ENCODE measurements at regions of chr20 and their contacts with region 1.

Region 1: DNA sequence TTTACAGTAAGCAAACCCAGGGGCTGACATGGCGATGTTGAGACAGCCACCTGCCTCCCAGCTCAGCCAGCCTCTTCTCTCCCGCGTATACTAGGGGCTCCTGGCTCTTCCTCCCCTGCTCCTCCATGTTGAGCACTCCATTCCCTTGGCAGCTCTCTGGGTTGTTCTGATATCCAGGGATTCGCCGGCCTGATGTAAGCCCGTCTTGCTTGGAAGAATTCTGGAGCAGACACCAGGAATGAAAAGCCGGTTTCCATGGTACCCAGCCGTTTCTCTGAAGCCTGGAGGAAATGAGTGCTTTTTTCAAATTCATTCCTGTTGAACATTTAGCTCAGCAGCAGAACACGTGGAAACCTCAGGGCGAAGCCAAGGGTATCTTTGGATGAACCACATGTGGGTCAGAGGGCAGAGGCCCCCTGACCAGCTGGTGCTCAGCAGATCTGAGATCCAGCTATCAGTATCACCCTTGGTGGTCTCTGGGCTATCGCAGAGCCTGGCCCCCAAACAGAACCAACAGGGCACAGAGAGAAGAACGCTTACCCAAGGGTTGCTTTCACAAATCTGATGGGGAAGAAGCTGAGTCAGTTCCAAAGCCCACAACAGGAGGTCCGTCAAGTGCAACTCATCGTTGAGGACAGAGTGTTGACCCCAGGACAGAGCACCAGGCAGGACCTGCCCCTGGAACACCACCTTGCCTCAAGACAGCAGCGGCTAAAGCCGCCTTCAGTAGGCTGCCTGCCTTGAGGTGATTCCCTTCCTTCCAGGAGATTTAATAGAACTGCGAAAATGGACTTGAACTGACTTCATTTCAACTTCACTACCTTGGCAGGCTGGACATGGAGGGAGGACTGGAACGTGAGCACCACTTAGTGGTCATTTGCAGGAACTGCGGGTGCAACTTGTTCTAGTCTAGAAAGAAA is 96.1 kb upstream of the RIN2 start:
- DNase-seq: peak in 4 of 5 donors; percentile 37 to 57 (median 44)
- ATAC-seq: peak in 3 of 4 donors; percentile 75 to 84 (median 81)
- H3K4me3 ChIP-seq: no peak overlapping the region
- H3K27ac ChIP-seq: no peak overlapping the region
- H3K4me1 ChIP-seq: peaks cover 0 to 9% (median 1%) of the 10 kb centered on the region in 12 donors
- H3K27me3 ChIP-seq: peaks cover 0 to 26% (median 0%) of the 10 kb centered on the region in 9 donors
- CTCF ChIP-seq: peak in 11 of 12 donors; percentile 96 to 99 (median 98)
- POLR2A ChIP-seq: no peak

Region 2: DNA sequence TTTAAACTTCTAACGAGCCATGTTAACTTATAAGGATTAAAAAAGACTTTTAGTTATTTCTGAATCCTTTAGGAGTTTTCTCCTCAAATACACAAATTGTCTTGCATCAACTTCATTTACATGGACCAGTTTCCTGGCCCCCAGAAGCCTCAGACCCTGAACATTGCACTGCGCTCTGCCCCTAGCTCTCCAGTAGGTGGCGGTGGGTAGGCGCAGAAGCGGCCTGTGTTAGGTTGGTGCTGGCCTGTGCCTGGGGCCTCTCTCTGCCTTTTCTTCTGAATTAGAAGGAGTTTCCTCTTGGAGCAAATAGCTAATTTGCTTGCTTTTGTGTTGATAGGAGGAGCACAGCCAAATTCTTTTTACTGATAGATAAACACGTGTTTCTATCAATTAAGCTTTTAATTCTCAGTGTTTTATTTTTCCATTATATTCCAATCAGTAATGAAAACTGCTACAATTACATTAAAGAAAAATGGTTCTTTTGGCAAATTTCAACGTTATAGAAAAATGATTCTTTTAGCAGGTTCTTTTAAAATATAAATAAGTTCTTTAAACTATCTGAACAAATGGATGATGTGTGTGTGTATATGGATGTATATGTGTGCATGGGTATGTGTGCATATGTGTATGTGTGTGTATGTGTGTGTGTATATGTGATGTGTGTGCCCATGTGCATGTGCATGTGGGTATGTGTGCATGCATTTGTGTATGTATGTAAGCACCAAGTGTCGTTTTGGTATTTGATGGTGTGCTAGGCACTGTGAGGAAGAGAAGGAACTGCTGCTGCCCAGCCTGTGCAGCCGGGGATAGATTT is 1029.6 kb before region 1 on chr20:
- intact Hi-C with region 1: loop called in 5 of 10 experiments (anchors 1 to 10 kb)
- DNase-seq: peak; percentile 56 to 70 (median 61)
- ATAC-seq: peak; percentile 88 to 94 (median 89)
- H3K4me3 ChIP-seq: no peak overlapping the region
- H3K27ac ChIP-seq: no peak overlapping the region
- H3K4me1 ChIP-seq: peaks cover 0 to 5% (median 0%) of the 10 kb centered on the region in 12 donors
- H3K27me3 ChIP-seq: no peaks in the 10 kb centered on the region
- CTCF ChIP-seq: peak; percentile 77 to 96 (median 86)
- POLR2A ChIP-seq: no peak

Region 3: GRCh38 chr20:19205977-19206396 is 456.0 kb before region 1 on chr20:
- intact Hi-C with region 1: loop called in 9 of 10 experiments (anchors 1 to 5 kb)
- DNase-seq: peak; percentile 46 to 82 (median 64)
- ATAC-seq: peak in 3 of 4 donors; percentile 48 to 70 (median 61)
- H3K4me3 ChIP-seq: no peak overlapping the region
- H3K27ac ChIP-seq: no peak overlapping the region
- H3K4me1 ChIP-seq: peaks cover 0 to 4% (median 0%) of the 10 kb centered on the region in 12 donors
- H3K27me3 ChIP-seq: peaks cover 0 to 12% (median 0%) of the 10 kb centered on the region in 9 donors
- CTCF ChIP-seq: peak; percentile 77 to 92 (median 84)
- POLR2A ChIP-seq: no peak

Region 4: GRCh38 chr20:19583532-19584175 is 78.3 kb before region 1 on chr20:
- intact Hi-C with region 1: loop called in 3 of 10 experiments (anchors 2 to 10 kb)
- DNase-seq: peak; percentile 44 to 79 (median 65)
- ATAC-seq: peak in 3 of 4 donors; percentile 81 to 86 (median 85)
- H3K4me3 ChIP-seq: no peak overlapping the region
- H3K27ac ChIP-seq: no peak overlapping the region
- H3K4me1 ChIP-seq: no peaks in the 10 kb centered on the region
- H3K27me3 ChIP-seq: peaks cover 0 to 6% (median 0%) of the 10 kb centered on the region in 9 donors
- CTCF ChIP-seq: peak; percentile 70 to 85 (median 79)
- POLR2A ChIP-seq: no peak

Region 5: DNA sequence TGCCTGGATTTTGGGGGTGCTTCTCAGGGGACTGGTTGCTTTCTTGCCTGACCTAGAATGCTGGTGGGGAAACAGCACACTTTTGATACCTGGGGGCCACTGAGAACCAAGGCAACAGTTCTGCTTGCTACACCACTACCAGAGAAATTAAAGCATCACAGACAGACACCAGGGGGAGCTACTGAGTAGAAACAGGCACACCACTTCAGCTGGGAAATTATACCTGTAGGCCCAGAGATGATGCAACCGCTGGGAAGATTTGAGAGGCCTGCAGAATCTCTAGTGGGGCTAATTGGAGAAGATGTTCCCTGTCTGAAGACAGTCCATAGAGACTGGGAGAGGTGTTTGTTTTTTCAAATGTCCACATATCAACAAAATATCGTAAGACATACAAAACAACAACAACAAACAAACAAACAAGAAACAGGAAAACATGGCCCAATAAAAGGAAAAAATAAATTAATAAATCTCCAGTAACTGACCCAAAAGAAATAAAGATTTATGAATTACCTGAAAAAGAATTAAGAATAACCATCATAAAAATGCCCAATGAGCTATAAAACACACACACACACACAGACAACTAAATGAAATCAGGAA is 33.3 kb before region 1 on chr20:
- intact Hi-C with region 1: loop called in 9 of 10 experiments (anchors 1 to 5 kb)
- DNase-seq: peak in 3 of 5 donors; percentile 25 to 43 (median 27)
- ATAC-seq: peak in 3 of 4 donors; percentile 45 to 54 (median 51)
- H3K4me3 ChIP-seq: no peak overlapping the region
- H3K27ac ChIP-seq: no peak overlapping the region
- H3K4me1 ChIP-seq: peaks cover 0 to under 1% (median 0%) of the 10 kb centered on the region in 12 donors
- H3K27me3 ChIP-seq: no peaks in the 10 kb centered on the region
- CTCF ChIP-seq: peak; percentile 37 to 72 (median 60)
- POLR2A ChIP-seq: no peak

Region 6: DNA sequence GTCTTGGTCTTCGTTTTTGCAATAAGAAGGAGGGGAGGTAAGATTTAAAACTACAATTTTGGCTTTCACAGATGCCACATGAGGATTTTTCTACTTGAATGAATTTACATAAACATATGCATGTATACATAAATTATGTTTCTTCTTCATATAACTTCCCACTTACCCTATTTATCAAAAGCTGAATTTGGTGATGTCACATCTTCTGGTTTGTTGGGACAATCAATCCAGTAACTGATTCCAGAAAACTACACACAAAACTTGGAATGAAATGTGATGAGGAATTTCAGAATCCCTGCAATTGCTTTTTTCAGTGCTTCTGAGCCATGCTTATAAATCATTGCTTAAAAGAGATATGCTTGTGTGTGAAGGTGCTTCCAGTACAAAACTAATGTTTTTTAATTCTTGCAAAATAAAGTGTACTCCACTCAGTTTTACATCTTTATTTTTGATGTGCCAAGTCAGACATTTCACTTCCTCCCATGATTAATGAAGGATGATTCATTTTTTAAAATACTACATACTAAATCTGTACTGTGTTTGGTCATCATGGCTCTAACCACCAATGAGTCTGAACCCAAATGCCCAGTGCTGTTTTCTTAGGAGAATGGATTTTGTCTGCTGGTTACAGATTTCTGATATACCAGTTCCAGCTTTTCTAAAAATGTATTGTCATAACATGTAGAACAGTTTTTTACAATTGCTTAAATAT is 64.0 kb after region 1 on chr20:
- intact Hi-C with region 1: no loop called
- DNase-seq: no peak
- ATAC-seq: no peak
- H3K4me3 ChIP-seq: no peak overlapping the region
- H3K27ac ChIP-seq: no peak overlapping the region
- H3K4me1 ChIP-seq: no peaks in the 10 kb centered on the region
- H3K27me3 ChIP-seq: no peaks in the 10 kb centered on the region
- CTCF ChIP-seq: no peak
- POLR2A ChIP-seq: no peak

Region 7: DNA sequence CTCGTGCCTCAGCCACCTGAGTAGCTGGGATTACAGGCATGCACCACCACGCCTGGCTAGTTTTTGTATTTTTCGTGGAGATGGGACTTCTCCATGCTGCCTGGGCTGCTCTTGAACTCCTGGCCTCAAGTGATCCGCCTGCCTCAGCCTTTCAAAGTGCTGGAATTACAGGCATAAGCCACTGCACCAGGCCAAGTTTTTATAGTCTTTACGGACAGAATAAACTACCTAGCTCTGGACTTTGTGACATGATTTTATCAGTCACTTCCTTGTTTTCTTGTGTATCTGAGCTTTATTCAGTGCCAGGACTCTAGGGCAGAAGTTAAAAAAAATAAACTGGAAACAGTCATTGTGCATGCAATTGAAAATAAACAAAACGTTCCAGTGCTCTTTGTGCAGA is 1097.2 kb after region 1 on chr20:
- intact Hi-C with region 1: no loop called
- DNase-seq: no peak
- ATAC-seq: peak in 2 of 4 donors; percentile 36 to 45
- H3K4me3 ChIP-seq: no peak overlapping the region
- H3K27ac ChIP-seq: peak overlapping the region in 11 of 12 donors; percentile 12 to 78 (median 48)
- H3K4me1 ChIP-seq: peaks cover 0 to 28% (median 2%) of the 10 kb centered on the region in 12 donors
- H3K27me3 ChIP-seq: no peaks in the 10 kb centered on the region
- CTCF ChIP-seq: no peak
- POLR2A ChIP-seq: no peak

Measured in heart left ventricle (tissue), 16 donors.